ENCODE measurements at regions of chr20 and their contacts with region 1.

Region 1: DNA sequence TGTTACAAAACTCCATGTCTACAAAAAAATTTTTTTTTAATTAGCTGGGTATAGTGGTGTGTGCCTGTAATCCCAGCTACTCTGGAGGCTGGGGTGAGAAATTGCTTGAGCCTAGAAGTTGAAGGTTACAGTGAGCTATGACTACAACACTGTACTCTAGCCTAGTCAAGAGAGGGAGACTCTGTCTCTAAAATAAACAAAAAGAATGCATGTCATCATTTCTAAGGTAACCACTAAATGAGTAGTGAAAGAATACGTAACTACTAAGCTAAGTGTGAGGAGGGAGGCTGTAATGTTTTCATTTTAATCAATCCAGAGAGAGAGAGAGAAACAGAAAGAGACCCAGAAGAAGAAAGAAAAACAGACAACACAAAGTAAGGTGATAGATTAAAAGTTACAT is 9.9 kb downstream of the SYCP2 start:
- DNase-seq: no peak
- ATAC-seq: peak; percentile 32; the same call in 2 of the 3 replicates
- H3K4me3 ChIP-seq: no peak overlapping the region
- H3K27ac ChIP-seq: no peak overlapping the region
- H3K4me1 ChIP-seq: no peaks in the 10 kb centered on the region
- H3K27me3 ChIP-seq: no peaks in the 10 kb centered on the region
- CTCF ChIP-seq: no peak
- EP300 ChIP-seq: no peak
- POLR2A ChIP-seq: no peak
- RAD21 ChIP-seq: no peak

Region 2: DNA sequence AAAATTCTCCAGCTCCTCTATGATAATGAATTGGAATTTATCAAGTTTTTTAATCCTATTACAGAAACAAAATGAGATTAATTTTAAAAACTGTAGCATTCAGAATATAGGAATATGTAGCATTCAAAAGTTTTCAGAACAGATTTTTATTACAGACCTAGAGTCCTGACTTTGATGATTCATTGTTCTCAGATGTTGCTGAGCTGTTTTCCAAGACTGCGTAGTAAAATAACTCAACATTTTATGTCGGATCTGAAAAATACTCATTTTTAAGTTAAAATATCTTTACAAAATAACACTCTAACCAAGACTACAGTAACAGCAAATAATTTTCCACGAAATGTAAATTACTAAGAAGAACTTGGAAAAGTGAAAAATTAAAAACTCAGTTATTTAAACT is 57.2 kb before region 1 on chr20:
- CTCF ChIA-PET with region 1: no interaction called
- POLR2A ChIA-PET with region 1: no interaction called
- RAD21 ChIA-PET with region 1: no interaction called
- SMC1A ChIA-PET with region 1: no interaction called
- in situ Hi-C with region 1: no loop called
- intact Hi-C with region 1: no loop called
- DNase-seq: no peak
- ATAC-seq: no peak
- H3K4me3 ChIP-seq: no peak overlapping the region
- H3K27ac ChIP-seq: no peak overlapping the region
- H3K4me1 ChIP-seq: no peaks in the 10 kb centered on the region
- H3K27me3 ChIP-seq: no peaks in the 10 kb centered on the region
- CTCF ChIP-seq: no peak
- EP300 ChIP-seq: no peak
- POLR2A ChIP-seq: no peak
- RAD21 ChIP-seq: no peak

Region 3: GRCh38 chr20:59933849-59934596 is 10.5 kb after region 1 on chr20:
- CTCF ChIA-PET with region 1: interaction called, 11 read pairs
- POLR2A ChIA-PET with region 1: no interaction called
- RAD21 ChIA-PET with region 1: interaction called, 3 read pairs
- SMC1A ChIA-PET with region 1: interaction called, 3 read pairs
- in situ Hi-C with region 1: no loop called
- intact Hi-C with region 1: no loop called
- DNase-seq: no peak
- ATAC-seq: peak; percentile 99
- H3K4me3 ChIP-seq: peak overlapping the region; percentile 63
- H3K27ac ChIP-seq: no peak overlapping the region
- H3K4me1 ChIP-seq: peaks cover 8% of the 10 kb centered on the region
- H3K27me3 ChIP-seq: no peaks in the 10 kb centered on the region; a peak in 1 of 4 replicates
- CTCF ChIP-seq: peak; percentile 81 to 92 (median 85)
- EP300 ChIP-seq: no peak
- POLR2A ChIP-seq: no peak
- RAD21 ChIP-seq: 0 out of 2 replicates have a peak, but pooled peaks have one; percentile 26